Heart right ventricle (tissue), 16 donors: ENCODE measurements at regions of chr3 and their contacts with region 1.

Region 1: GRCh38 chr3:37736624-37737023 is 125.1 kb upstream of the CTDSPL start:
- DNase-seq: no peak
- ATAC-seq: no peak
- H3K4me3 ChIP-seq: no peak overlapping the region
- H3K27ac ChIP-seq: peak overlapping the region in 5 of 10 donors; percentile 27 to 84 (median 60)
- H3K4me1 ChIP-seq: peaks cover 5 to 66% (median 35%) of the 10 kb centered on the region in 9 donors
- H3K27me3 ChIP-seq: no peaks in the 10 kb centered on the region
- CTCF ChIP-seq: no peak

Region 2: GRCh38 chr3:37537914-37538691 is 198.5 kb before region 1 on chr3:
- intact Hi-C with region 1: loop called in 2 of 10 experiments (anchors 5 to 10 kb)
- DNase-seq: peak in 1 of 2 donors; percentile 24
- ATAC-seq: peak; percentile 26 to 69 (median 51)
- H3K4me3 ChIP-seq: no peak overlapping the region
- H3K27ac ChIP-seq: peak overlapping the region in 8 of 10 donors; percentile 8 to 77 (median 48)
- H3K4me1 ChIP-seq: peaks cover 9 to 85% (median 50%) of the 10 kb centered on the region in 9 donors
- H3K27me3 ChIP-seq: no peaks in the 10 kb centered on the region
- CTCF ChIP-seq: no peak